ENCODE measurements at regions of chr1 and their contacts with region 1.

Region 1: DNA sequence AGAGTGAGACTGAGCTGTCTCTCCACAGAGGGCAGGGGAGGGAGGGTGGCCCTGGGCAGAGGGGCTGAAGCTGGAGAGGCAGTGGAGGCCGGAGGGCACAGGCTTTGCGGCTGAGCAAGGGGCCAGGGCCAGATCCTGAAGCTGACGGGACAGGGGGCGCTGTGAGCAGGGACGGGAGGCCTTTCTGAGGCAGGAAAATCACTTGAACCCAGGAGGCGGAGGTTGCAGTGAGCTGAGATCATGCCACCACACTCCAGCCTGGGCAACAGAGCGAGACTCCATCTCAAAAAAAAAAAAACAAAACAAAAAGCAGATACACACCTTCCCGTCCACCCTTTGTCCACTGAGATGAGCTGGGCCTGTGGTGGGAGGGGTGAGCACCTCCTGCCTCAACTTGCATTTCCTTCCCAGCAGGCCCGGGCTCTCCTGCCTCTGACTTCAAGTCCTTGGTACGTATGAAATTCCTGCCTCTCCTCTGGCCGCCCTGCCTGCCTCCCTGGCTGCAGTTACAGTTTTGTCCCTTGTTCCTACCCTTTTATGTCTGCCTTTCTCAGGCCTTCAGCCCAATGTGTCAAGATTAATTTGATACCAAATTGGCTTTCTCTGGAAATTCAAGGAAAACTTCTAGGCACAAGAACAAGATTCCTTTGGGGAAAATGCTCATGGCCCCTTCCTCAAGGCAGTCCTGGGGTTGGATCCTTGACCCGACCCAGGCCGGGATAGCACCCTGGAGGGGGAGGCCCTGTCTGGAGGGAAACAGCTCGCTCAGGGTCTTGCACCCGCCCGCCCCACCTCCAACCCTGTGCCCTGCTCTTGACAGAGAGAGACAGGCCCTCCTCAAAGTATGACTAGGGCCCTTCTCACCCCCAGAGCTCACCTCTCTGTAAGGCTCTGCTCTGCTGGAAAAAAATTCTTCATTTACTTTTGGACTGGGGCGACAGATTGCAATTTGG is 11.2 kb upstream of the ADAMTSL4 start:
- DNase-seq: no peak
- H3K4me3 ChIP-seq: no peak overlapping the region
- H3K27ac ChIP-seq: peak overlapping the region; percentile 68 to 90 (median 80)
- H3K4me1 ChIP-seq: peaks cover 18 to 51% (median 28%) of the 10 kb centered on the region in 3 donors
- H3K27me3 ChIP-seq: no peaks in the 10 kb centered on the region
- CTCF ChIP-seq: peak in 1 of 6 experiments; percentile 2
- POLR2A ChIP-seq: no peak

Region 2: GRCh38 chr1:150464422-150464826 is 73.6 kb before region 1 on chr1:
- intact Hi-C with region 1: loop called (anchors 10 kb)
- DNase-seq: no peak
- H3K4me3 ChIP-seq: no peak overlapping the region
- H3K27ac ChIP-seq: peak overlapping the region in 2 of 4 donors; percentile 51 to 80
- H3K4me1 ChIP-seq: peaks cover 0 to 16% (median 5%) of the 10 kb centered on the region in 3 donors
- H3K27me3 ChIP-seq: no peaks in the 10 kb centered on the region
- CTCF ChIP-seq: peak; percentile 76 to 86 (median 79)
- POLR2A ChIP-seq: no peak

Region 3: DNA sequence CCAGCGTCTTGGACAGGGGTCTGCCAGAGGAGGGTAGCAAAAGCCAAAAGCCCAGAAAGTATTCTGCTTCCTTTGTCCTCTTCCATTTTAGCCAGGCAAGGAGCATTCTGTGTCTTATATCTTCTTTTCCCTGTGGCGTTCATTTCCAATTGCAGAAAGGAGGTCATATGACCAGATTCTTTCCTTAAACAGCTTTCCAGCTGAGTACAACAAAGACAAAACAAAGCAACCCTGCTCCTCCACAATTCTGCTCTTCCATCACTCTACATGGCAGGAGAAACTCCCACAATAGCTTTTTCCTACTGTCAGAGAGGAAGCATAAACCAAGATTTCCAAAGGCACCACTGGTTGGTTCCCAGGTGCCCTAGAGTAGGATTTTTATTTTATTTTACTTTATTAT is 71.7 kb after region 1 on chr1:
- intact Hi-C with region 1: no loop called
- DNase-seq: no peak
- H3K4me3 ChIP-seq: no peak overlapping the region
- H3K27ac ChIP-seq: peak overlapping the region; percentile 81 to 91 (median 88)
- H3K4me1 ChIP-seq: peaks cover 45 to 65% (median 53%) of the 10 kb centered on the region in 3 donors
- H3K27me3 ChIP-seq: no peaks in the 10 kb centered on the region
- CTCF ChIP-seq: no peak
- POLR2A ChIP-seq: no peak

Measured in esophagus squamous epithelium (tissue), 5 donors.